Panc1 (cell line): ENCODE measurements at regions of chrX and their contacts with region 1.

Region 1: GRCh38 chrX:30713061-30713525 is 59.9 kb downstream of the GK start:
- DNase-seq: peak; percentile 12
- ATAC-seq: peak; percentile 72; the same call in 1 of the 2 replicates
- H3K4me3 ChIP-seq: no peak overlapping the region
- H3K27ac ChIP-seq: no peak overlapping the region
- H3K4me1 ChIP-seq: no peaks in the 10 kb centered on the region
- H3K27me3 ChIP-seq: no peaks in the 10 kb centered on the region
- CTCF ChIP-seq: peak; percentile 76

Region 2: DNA sequence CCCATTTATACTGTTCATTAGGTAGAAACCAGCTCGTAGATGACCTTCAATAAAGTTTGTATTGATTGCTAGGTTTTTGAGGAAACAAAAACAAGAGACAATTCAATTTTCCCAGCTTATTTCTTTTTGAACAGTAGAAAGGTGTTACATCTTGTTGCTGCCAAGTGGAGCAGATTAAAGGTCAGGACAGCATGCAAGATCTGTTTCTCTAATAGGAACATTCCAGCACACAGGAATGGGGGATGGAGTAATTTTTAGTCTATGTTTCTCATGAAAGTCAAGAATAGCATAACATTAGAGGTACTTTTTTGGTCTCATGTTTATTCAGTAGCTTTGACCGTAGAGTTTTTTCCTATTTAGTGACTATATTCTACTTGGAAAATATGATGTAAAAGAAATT is 1993.5 kb before region 1 on chrX:
- CTCF ChIA-PET with region 1: interaction called, 11 read pairs
- POLR2A ChIA-PET with region 1: no interaction called
- in situ Hi-C with region 1: no loop called
- intact Hi-C with region 1: no loop called
- DNase-seq: no peak
- ATAC-seq: no peak
- H3K4me3 ChIP-seq: no peak overlapping the region
- H3K27ac ChIP-seq: no peak overlapping the region
- H3K4me1 ChIP-seq: no peaks in the 10 kb centered on the region
- H3K27me3 ChIP-seq: no peaks in the 10 kb centered on the region
- CTCF ChIP-seq: no peak

Region 3: DNA sequence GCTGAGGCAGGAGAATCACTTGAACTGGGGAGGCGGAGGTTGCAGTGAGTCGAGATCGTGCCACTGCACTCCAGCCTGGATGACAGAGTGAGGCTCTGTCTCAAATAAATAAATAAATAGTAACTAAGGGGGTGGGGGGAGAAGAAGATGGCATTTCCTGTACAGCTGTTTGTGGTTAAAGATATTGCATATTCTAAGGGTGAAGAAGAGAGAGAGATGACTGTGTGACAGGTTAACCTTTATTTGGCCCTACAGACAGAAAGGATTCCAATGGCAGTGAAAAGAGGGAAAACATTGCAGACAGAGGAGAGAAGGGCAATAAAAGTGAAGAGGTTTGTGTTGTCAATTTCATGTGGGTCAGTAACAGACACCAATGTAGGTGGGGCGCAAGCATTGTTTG is 145.0 kb before region 1 on chrX:
- CTCF ChIA-PET with region 1: no interaction called
- POLR2A ChIA-PET with region 1: no interaction called
- in situ Hi-C with region 1: no loop called
- intact Hi-C with region 1: loop called (anchors 2 kb)
- DNase-seq: no peak
- ATAC-seq: no peak
- H3K4me3 ChIP-seq: no peak overlapping the region
- H3K27ac ChIP-seq: no peak overlapping the region
- H3K4me1 ChIP-seq: no peaks in the 10 kb centered on the region
- H3K27me3 ChIP-seq: no peaks in the 10 kb centered on the region
- CTCF ChIP-seq: no peak

Region 4: GRCh38 chrX:30635630-30636029 is 77.5 kb before region 1 on chrX:
- CTCF ChIA-PET with region 1: interaction called, 3 read pairs
- POLR2A ChIA-PET with region 1: no interaction called
- in situ Hi-C with region 1: no loop called
- intact Hi-C with region 1: loop called (anchors 10 kb)
- DNase-seq: no peak
- ATAC-seq: no peak
- H3K4me3 ChIP-seq: no peak overlapping the region
- H3K27ac ChIP-seq: no peak overlapping the region
- H3K4me1 ChIP-seq: no peaks in the 10 kb centered on the region
- H3K27me3 ChIP-seq: no peaks in the 10 kb centered on the region
- CTCF ChIP-seq: peak; percentile 55